Pancreas (tissue), 10 donors: ENCODE measurements at regions of chr11 and their contacts with region 1.

Region 1: DNA sequence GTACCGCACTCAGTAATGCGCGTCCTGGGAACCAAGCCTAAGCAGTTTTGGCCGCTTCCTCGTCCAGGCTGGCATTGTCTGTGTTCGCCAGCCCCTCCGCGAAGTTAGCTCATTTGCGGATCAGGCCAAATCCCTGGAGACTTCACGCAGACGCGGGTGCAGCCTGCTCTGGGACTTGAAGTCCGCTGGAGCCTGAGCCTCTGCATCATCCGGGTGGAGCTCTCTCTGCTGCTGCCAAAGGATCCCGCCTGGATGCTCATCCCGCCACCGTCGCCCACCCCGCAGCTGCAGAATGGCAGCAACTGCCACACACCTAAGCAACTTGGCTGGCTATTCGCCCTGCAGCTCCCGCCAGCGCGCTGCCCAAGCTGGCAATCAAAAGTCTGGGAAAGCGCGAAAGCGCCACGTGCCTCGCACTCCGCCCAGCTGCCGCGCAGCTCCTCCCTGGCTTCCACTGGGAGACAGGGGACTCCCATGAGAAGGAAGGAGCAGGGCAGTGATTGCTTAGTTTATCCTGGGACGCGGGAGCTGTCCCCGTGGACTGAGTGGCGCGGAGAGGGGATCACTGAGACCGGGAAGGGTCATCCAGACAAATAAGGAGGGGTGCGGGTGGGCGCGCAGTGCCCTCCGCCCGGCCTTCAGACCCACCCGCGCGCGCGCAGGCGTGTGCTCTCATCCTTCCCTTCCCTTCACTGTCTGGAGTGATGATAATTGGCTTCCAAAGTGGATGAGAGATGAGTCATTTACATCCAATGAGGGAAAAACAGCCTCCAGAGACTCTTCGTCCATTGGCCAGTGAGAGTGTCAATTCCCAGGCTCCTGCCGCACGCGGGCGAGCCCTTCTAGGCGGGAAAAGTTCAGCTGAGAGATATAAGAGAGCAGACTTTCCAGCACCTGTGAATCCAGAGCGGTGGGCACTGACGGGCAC is 23.2 kb upstream of the GLYATL1B start:
- DNase-seq: peak in 2 of 6 donors; percentile 49 to 60
- ATAC-seq: no peak
- H3K4me3 ChIP-seq: no peak overlapping the region
- H3K27ac ChIP-seq: no peak overlapping the region
- H3K4me1 ChIP-seq: no peaks in the 10 kb centered on the region
- H3K27me3 ChIP-seq: peaks cover 0 to 13% (median 0%) of the 10 kb centered on the region in 4 donors
- CTCF ChIP-seq: no peak

Region 2: GRCh38 chr11:58958500-58958899 is 104.4 kb before region 1 on chr11:
- intact Hi-C with region 1: loop called in 1 of 3 experiments (anchors 10 kb)
- DNase-seq: peak in 5 of 6 donors; percentile 22 to 72 (median 48)
- ATAC-seq: peak in 3 of 4 donors; percentile 67 to 87 (median 71)
- H3K4me3 ChIP-seq: no peak overlapping the region
- H3K27ac ChIP-seq: no peak overlapping the region
- H3K4me1 ChIP-seq: no peaks in the 10 kb centered on the region
- H3K27me3 ChIP-seq: peaks cover 0 to 7% (median 0%) of the 10 kb centered on the region in 4 donors
- CTCF ChIP-seq: peak; percentile 32 to 59 (median 46)

Region 3: GRCh38 chr11:58980159-58980843 is 82.6 kb before region 1 on chr11:
- intact Hi-C with region 1: no loop called
- DNase-seq: no peak
- ATAC-seq: no peak
- H3K4me3 ChIP-seq: no peak overlapping the region
- H3K27ac ChIP-seq: no peak overlapping the region
- H3K4me1 ChIP-seq: no peaks in the 10 kb centered on the region
- H3K27me3 ChIP-seq: no peaks in the 10 kb centered on the region
- CTCF ChIP-seq: no peak

Region 4: DNA sequence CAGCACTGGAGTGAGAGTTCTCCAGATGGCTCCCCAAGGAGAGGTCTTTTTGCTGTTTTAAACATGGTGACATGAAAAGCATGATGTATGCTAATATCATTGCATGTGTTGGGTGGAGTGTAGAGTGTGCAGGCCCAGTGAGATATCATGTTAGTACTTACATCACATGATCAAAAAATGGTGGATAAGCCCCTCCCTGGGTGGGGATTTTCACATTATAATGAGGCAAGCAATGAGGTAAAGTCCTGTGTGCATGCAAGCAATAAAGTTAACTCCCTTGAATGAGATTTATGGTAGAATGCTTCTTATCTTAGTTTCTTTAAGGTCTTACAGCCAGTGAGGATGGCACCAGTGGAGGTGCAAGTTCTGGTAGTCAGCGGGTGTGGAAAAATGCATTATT is 52.7 kb after region 1 on chr11:
- intact Hi-C with region 1: no loop called
- DNase-seq: no peak
- ATAC-seq: no peak
- H3K4me3 ChIP-seq: no peak overlapping the region
- H3K27ac ChIP-seq: no peak overlapping the region
- H3K4me1 ChIP-seq: no peaks in the 10 kb centered on the region
- H3K27me3 ChIP-seq: peaks cover 0 to 3% (median 0%) of the 10 kb centered on the region in 4 donors
- CTCF ChIP-seq: no peak